ENCODE measurements at regions of chr4 and their contacts with region 1.

Region 1: GRCh38 chr4:81471588-81472288 is at the start of gene RASGEF1B:
- DNase-seq: peak; percentile 85 to 98 (median 95)
- ATAC-seq: peak; percentile 87
- H3K4me3 ChIP-seq: peak within 1 kb of the TSS; percentile 69 to 78
- H3K4me3 Mint-ChIP-seq: peak within 1 kb of the TSS; percentile 98
- H3K27ac ChIP-seq: peak within 1 kb of the TSS; percentile 91 to 96
- H3K27ac Mint-ChIP-seq: peak within 1 kb of the TSS; percentile 96
- H3K4me1 ChIP-seq: peaks cover 23% of the 10 kb centered on the region
- H3K4me1 Mint-ChIP-seq: peaks cover 42% of the 10 kb centered on the region
- H3K27me3 ChIP-seq: no peaks in the 10 kb centered on the region
- H3K27me3 Mint-ChIP-seq: no peaks in the 10 kb centered on the region
- CTCF ChIP-seq: no peak
- total RNA-seq, gene RASGEF1B: 103 to 110 TPM

Region 2: GRCh38 chr4:81378386-81378785 is 93.4 kb before region 1 on chr4:
- CTCF ChIA-PET with region 1: no interaction called
- POLR2A ChIA-PET with region 1: no interaction called
- intact Hi-C with region 1: no loop called
- DNase-seq: no peak
- ATAC-seq: no peak
- H3K4me3 ChIP-seq: no peak overlapping the region
- H3K4me3 Mint-ChIP-seq: no peak overlapping the region
- H3K27ac ChIP-seq: no peak overlapping the region
- H3K27ac Mint-ChIP-seq: no peak overlapping the region
- H3K4me1 ChIP-seq: no peaks in the 10 kb centered on the region
- H3K4me1 Mint-ChIP-seq: no peaks in the 10 kb centered on the region
- H3K27me3 ChIP-seq: no peaks in the 10 kb centered on the region
- H3K27me3 Mint-ChIP-seq: peaks cover 28% of the 10 kb centered on the region
- CTCF ChIP-seq: no peak

Region 3: DNA sequence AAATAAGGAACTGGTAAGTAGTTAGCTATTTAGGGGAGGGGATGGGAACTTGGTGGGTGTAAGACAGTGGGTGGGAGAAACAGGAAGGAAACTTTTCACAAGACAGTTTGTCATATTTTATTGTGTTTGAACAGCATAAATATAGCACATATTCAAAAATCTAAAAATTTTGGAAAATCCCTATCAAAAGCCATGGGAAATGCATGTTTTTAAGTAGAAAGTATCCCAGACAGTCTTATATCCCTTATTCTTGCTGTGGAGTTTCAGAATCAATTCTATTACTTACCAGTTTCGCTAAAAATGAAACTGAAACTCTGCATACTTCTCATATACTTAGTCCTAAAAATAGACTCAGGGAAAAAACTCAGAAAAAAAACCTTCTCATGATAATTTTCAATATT is 22.3 kb after region 1 on chr4:
- CTCF ChIA-PET with region 1: interaction called, 37 read pairs
- POLR2A ChIA-PET with region 1: interaction called, 50 read pairs
- intact Hi-C with region 1: loop called (anchors 1 kb)
- DNase-seq: peak in 2 of 9 experiments; percentile 46 to 71
- ATAC-seq: peak; percentile 16
- H3K4me3 ChIP-seq: peak overlapping the region; percentile 12 to 32
- H3K4me3 Mint-ChIP-seq: peak overlapping the region; percentile 78
- H3K27ac ChIP-seq: peak overlapping the region; percentile 7 to 71
- H3K27ac Mint-ChIP-seq: peak overlapping the region; percentile 93
- H3K4me1 ChIP-seq: peaks cover 40% of the 10 kb centered on the region
- H3K4me1 Mint-ChIP-seq: peaks cover 50% of the 10 kb centered on the region
- H3K27me3 ChIP-seq: no peaks in the 10 kb centered on the region
- H3K27me3 Mint-ChIP-seq: no peaks in the 10 kb centered on the region
- CTCF ChIP-seq: no peak

Region 4: DNA sequence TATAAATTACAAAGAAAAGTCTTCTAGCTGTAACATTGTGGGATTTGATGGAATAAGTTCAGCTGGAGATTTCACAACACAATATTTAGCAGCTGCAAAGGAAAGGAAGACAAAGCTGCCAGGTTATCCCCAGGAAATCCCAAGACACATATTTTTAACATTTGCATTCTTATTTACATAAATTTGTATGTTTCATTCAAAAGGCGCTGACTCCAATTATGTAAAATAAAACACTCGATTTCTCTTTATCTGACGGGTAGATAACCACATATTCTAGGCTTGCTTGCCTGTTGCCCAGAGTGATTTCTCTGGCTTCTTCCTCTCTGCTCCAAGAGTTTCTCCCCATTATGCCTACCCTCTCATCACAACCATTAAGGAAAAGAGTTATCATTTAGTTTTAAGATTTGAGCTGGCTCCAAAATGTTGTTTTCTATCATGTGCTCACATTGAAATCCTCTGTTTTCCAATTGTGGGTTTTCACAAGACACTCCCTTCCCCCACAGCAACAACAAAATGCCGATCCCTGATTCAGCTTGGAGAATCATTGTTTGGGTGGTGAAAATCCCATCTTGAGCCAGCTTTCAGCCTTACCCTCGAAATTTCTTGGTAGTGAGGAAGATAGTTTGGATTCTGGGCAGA is 128.1 kb after region 1 on chr4:
- CTCF ChIA-PET with region 1: interaction called, 8 read pairs
- POLR2A ChIA-PET with region 1: no interaction called
- intact Hi-C with region 1: loop called in 1 of 2 experiments (anchors 5 kb)
- DNase-seq: no peak
- ATAC-seq: no peak
- H3K4me3 ChIP-seq: no peak overlapping the region
- H3K4me3 Mint-ChIP-seq: no peak overlapping the region
- H3K27ac ChIP-seq: no peak overlapping the region
- H3K27ac Mint-ChIP-seq: no peak overlapping the region
- H3K4me1 ChIP-seq: no peaks in the 10 kb centered on the region
- H3K4me1 Mint-ChIP-seq: no peaks in the 10 kb centered on the region
- H3K27me3 ChIP-seq: no peaks in the 10 kb centered on the region
- H3K27me3 Mint-ChIP-seq: no peaks in the 10 kb centered on the region
- CTCF ChIP-seq: no peak

Region 5: GRCh38 chr4:81844717-81845116 is 373.0 kb after region 1 on chr4:
- CTCF ChIA-PET with region 1: interaction called, 205 read pairs
- POLR2A ChIA-PET with region 1: interaction called, 6 read pairs
- intact Hi-C with region 1: loop called (anchors 1 kb)
- DNase-seq: peak; percentile 27 to 81 (median 73)
- ATAC-seq: peak; percentile 96
- H3K4me3 ChIP-seq: no peak overlapping the region
- H3K4me3 Mint-ChIP-seq: no peak overlapping the region
- H3K27ac ChIP-seq: no peak overlapping the region
- H3K27ac Mint-ChIP-seq: no peak overlapping the region
- H3K4me1 ChIP-seq: no peaks in the 10 kb centered on the region
- H3K4me1 Mint-ChIP-seq: no peaks in the 10 kb centered on the region
- H3K27me3 ChIP-seq: no peaks in the 10 kb centered on the region
- H3K27me3 Mint-ChIP-seq: no peaks in the 10 kb centered on the region
- CTCF ChIP-seq: peak; percentile 79

Region 6: DNA sequence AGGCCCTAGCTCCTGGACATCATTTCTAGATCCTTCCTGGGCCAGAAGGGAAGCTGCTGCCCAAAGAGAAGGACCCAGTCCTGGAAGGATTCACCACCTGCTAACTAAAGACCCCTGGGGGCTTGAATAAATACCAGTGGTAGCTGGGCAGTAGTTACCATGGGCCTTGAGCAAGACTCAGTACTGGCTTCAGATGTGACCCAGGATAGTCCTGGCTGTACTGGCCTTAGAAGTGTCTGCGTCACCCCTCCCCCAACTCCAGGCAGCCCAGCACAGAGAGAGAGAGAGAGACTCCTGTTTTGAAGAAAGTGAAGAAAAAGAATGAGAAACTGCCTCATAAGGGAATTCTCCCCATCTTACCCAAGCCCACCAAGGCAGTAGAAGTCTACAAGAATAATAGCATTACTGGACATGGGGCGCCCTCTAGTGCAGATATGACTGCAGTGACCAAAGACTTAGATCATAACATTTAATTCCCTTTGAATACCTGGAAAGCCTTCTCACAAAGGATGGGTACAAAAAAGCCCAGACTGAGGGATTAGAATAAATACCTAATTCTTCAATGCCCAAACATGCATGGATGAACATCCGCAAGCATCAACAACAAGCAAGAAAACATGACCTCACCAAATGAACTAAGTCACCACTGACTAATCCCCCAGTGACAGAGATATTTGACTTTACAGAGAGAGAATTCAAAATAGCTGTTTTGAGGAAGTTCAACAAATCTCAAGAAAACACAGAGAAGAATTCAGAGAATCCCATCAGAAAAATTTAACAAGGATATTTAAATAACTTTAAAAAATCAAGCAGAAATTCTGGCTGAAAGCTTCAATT is 730.3 kb after region 1 on chr4:
- CTCF ChIA-PET with region 1: interaction called, 8 read pairs
- POLR2A ChIA-PET with region 1: no interaction called
- intact Hi-C with region 1: loop called in 1 of 2 experiments (anchors 2 kb)
- DNase-seq: peak in 7 of 9 experiments; percentile 6 to 64 (median 37)
- ATAC-seq: peak; percentile 34
- H3K4me3 ChIP-seq: no peak overlapping the region
- H3K4me3 Mint-ChIP-seq: no peak overlapping the region
- H3K27ac ChIP-seq: no peak overlapping the region
- H3K27ac Mint-ChIP-seq: no peak overlapping the region
- H3K4me1 ChIP-seq: no peaks in the 10 kb centered on the region
- H3K4me1 Mint-ChIP-seq: peaks cover 5% of the 10 kb centered on the region
- H3K27me3 ChIP-seq: peaks cover 0 to 3% of the 10 kb centered on the region in 2 experiments
- H3K27me3 Mint-ChIP-seq: peaks cover 3% of the 10 kb centered on the region
- CTCF ChIP-seq: peak; percentile 75

Region 7: GRCh38 chr4:82373816-82374625 is 902.3 kb after region 1 on chr4 and contains the start of gene HNRNPD:
- CTCF ChIA-PET with region 1: no interaction called
- POLR2A ChIA-PET with region 1: no interaction called
- intact Hi-C with region 1: loop called (anchors 1 to 10 kb)
- DNase-seq: peak; percentile 76 to 99 (median 91)
- ATAC-seq: peak; percentile 83
- H3K4me3 ChIP-seq: peak within 1 kb of the TSS; percentile 94 to 98
- H3K4me3 Mint-ChIP-seq: peak within 1 kb of the TSS; percentile 100
- H3K27ac ChIP-seq: peak within 1 kb of the TSS; percentile 87 to 99
- H3K27ac Mint-ChIP-seq: peak within 1 kb of the TSS; percentile 100
- H3K4me1 ChIP-seq: peaks cover 34% of the 10 kb centered on the region
- H3K4me1 Mint-ChIP-seq: peaks cover 51% of the 10 kb centered on the region
- H3K27me3 ChIP-seq: no peaks in the 10 kb centered on the region
- H3K27me3 Mint-ChIP-seq: no peaks in the 10 kb centered on the region
- CTCF ChIP-seq: no peak
- total RNA-seq, gene HNRNPD: 245 to 248 TPM

Measured in CD8-positive, alpha-beta T cell (primary cell).